Esophagus muscularis mucosa (tissue), 4 donors: ENCODE measurements at regions of chr6 and their contacts with region 1.

Region 1: DNA sequence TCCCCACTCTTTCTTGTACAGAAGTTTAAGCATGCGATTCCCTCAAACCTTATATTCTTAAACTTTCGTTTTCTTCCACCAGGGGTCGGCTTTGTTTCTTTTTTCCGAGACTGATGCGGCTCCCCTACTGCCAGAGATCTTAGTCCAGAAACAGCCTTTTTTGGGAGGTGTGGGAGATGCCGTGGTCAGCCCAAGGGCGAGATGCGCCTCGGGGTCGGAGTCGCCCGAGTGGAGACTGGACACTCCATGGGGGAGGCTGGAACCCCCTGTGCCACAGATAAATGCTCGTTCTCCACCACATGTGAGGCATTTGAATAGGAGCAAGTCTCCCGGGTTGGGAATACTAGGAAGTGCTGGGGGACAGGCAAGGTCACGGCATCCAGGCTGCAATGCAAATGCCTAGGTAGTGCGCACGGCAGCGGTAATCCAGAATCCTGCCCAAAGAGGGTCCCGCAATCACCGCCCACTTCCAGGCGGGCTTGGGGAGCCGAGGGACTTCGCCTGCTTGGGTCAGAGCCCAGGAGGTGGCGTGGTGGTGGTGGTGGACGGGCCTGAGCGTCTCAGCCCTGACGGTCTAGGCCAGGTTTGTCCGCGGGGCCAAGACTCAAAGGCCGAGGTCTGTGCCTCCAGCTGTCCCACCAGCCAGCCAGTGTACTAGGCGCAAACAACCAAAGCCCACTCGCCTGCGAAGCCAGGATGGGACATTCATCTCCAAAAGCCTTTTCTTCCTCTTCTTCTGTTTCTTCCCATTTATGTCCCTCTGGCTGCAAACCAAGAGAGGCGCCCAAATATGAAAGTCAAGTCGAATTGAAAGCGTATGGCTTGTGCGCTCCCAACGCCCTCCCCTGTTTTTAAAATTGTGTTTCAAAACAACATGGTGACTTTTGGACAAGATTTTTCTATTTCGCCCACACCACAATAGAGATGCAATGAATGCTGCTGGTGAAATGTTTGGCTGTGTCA is 39.3 kb upstream of the OSTM1 start:
- DNase-seq: no peak
- H3K4me3 ChIP-seq: peak overlapping the region; percentile 25 to 59 (median 34)
- H3K27ac ChIP-seq: no peak overlapping the region
- H3K4me1 ChIP-seq: peaks cover 39 to 53% (median 48%) of the 10 kb centered on the region in 4 donors
- H3K27me3 ChIP-seq: peaks cover 7 to 80% (median 42%) of the 10 kb centered on the region in 4 donors
- CTCF ChIP-seq: peak; percentile 46 to 54 (median 52)
- EP300 ChIP-seq: no peak
- POLR2A ChIP-seq: no peak

Region 2: DNA sequence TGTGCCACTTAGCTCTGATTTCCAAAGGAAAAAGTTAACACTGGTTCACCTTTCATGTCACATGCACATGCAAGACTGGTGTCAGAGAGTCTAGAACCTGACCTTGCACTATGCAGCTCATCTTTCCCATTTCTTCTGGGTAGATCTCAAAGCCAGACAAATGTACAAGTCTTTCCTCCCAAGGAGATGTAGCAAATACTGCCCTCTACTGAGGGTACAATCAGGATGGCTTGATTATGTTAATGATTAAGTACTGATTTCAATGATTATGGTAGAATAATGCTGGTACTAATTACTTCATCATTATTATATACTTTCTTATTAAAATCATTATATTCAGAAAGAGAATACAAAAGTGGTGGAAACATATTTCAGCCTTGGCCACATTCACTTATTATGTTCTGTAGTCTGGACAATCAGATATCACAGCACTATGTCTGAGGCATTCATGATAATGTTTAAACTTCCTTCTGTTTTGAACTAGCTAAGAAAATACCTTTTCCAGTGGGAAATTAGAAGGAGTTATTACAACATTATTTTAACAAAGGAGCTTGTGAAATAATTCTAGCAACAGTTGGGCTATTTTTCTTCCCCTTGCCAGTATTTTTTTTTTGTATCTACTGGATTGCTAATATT is 378.4 kb after region 1 on chr6:
- intact Hi-C with region 1: loop called (anchors 10 kb)
- DNase-seq: no peak
- H3K4me3 ChIP-seq: no peak overlapping the region
- H3K27ac ChIP-seq: no peak overlapping the region
- H3K4me1 ChIP-seq: no peaks in the 10 kb centered on the region
- H3K27me3 ChIP-seq: no peaks in the 10 kb centered on the region
- CTCF ChIP-seq: peak; percentile 37 to 48 (median 47)
- EP300 ChIP-seq: no peak
- POLR2A ChIP-seq: no peak

Region 3: DNA sequence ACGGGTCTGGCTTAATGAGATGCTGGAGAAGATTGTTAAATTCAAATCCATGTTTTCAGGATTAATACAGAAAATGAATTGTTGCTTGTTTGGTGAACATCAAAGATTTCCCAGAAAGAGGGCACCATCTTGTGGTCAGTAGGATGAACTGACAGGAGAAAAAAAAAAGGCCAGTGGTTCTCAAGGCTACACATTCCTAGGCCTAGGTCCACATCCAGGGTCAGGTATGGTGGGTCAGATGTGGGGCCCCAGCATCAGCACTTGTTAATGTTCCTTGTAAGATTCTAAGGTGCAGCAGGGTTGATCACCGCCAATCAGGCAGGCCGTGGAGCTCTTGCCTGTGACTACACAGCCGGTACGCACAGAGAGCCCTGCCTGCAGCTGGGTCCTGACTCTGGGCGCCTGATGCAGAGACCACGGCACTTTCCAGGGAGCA is 412.9 kb after region 1 on chr6:
- intact Hi-C with region 1: loop called (anchors 5 kb)
- DNase-seq: no peak
- H3K4me3 ChIP-seq: no peak overlapping the region
- H3K27ac ChIP-seq: no peak overlapping the region
- H3K4me1 ChIP-seq: no peaks in the 10 kb centered on the region
- H3K27me3 ChIP-seq: no peaks in the 10 kb centered on the region
- CTCF ChIP-seq: peak; percentile 66 to 93 (median 75)
- EP300 ChIP-seq: no peak
- POLR2A ChIP-seq: no peak